ENCODE measurements at regions of chr10 and their contacts with region 1.

Region 1: GRCh38 chr10:18214691-18215563 is 74.7 kb downstream of the CACNB2 start:
- DNase-seq: peak in 3 of 4 experiments; percentile 18 to 50 (median 47)
- ATAC-seq: peak; percentile 84
- H3K4me3 ChIP-seq: no peak overlapping the region
- H3K27ac ChIP-seq: no peak overlapping the region
- H3K4me1 ChIP-seq: no peaks in the 10 kb centered on the region
- H3K27me3 ChIP-seq: peaks cover 0 to 2% of the 10 kb centered on the region in 2 experiments; a peak in 2 of 5 replicates
- CTCF ChIP-seq: peak; percentile 65 to 72 (median 68)
- EP300 ChIP-seq: no peak
- POLR2A ChIP-seq: no peak
- RAD21 ChIP-seq: peak; percentile 67 to 78

Region 2: GRCh38 chr10:16853201-16853600 is 1361.7 kb before region 1 on chr10:
- CTCF ChIA-PET with region 1: no interaction called
- POLR2A ChIA-PET with region 1: no interaction called
- in situ Hi-C with region 1: no loop called
- intact Hi-C with region 1: loop called (anchors 5 kb)
- DNase-seq: peak in 2 of 4 experiments; percentile 17 to 45
- ATAC-seq: peak; percentile 71
- H3K4me3 ChIP-seq: no peak overlapping the region
- H3K27ac ChIP-seq: no peak overlapping the region
- H3K4me1 ChIP-seq: no peaks in the 10 kb centered on the region
- H3K27me3 ChIP-seq: peaks cover 0 to 2% of the 10 kb centered on the region in 2 experiments; a peak in 2 of 5 replicates
- CTCF ChIP-seq: peak; percentile 29 to 71 (median 44); a peak in 4 of 6 replicates
- EP300 ChIP-seq: no peak
- POLR2A ChIP-seq: no peak
- RAD21 ChIP-seq: peak; percentile 74 to 79

Region 3: GRCh38 chr10:17607603-17608332 is 607.2 kb before region 1 on chr10:
- CTCF ChIA-PET with region 1: no interaction called
- POLR2A ChIA-PET with region 1: no interaction called
- in situ Hi-C with region 1: loop called (anchors 10 kb)
- intact Hi-C with region 1: loop called (anchors 2 kb)
- DNase-seq: peak; percentile 47 to 71 (median 52)
- ATAC-seq: peak; percentile 94
- H3K4me3 ChIP-seq: no peak overlapping the region
- H3K27ac ChIP-seq: no peak overlapping the region
- H3K4me1 ChIP-seq: peaks cover 0 to 2% of the 10 kb centered on the region in 2 experiments; a peak in 2 of 5 replicates
- H3K27me3 ChIP-seq: no peaks in the 10 kb centered on the region
- CTCF ChIP-seq: peak; percentile 69 to 90 (median 74)
- EP300 ChIP-seq: no peak
- POLR2A ChIP-seq: no peak
- RAD21 ChIP-seq: peak; percentile 90 to 95

Region 4: GRCh38 chr10:17737027-17737965 is 477.6 kb before region 1 on chr10:
- CTCF ChIA-PET with region 1: no interaction called
- POLR2A ChIA-PET with region 1: no interaction called
- in situ Hi-C with region 1: no loop called
- intact Hi-C with region 1: loop called (anchors 5 kb)
- DNase-seq: peak in 1 of 4 experiments; percentile 54
- ATAC-seq: peak; percentile 48; the same call in 1 of the 3 replicates
- H3K4me3 ChIP-seq: no peak overlapping the region
- H3K27ac ChIP-seq: no peak overlapping the region
- H3K4me1 ChIP-seq: peaks cover 3 to 4% of the 10 kb centered on the region in 2 experiments; a peak in 3 of 5 replicates
- H3K27me3 ChIP-seq: no peaks in the 10 kb centered on the region
- CTCF ChIP-seq: peak; percentile 39 to 75 (median 69); a peak in 5 of 6 replicates
- EP300 ChIP-seq: no peak
- POLR2A ChIP-seq: no peak
- RAD21 ChIP-seq: peak; percentile 26 to 61; a peak in 2 of 4 replicates

Region 5: DNA sequence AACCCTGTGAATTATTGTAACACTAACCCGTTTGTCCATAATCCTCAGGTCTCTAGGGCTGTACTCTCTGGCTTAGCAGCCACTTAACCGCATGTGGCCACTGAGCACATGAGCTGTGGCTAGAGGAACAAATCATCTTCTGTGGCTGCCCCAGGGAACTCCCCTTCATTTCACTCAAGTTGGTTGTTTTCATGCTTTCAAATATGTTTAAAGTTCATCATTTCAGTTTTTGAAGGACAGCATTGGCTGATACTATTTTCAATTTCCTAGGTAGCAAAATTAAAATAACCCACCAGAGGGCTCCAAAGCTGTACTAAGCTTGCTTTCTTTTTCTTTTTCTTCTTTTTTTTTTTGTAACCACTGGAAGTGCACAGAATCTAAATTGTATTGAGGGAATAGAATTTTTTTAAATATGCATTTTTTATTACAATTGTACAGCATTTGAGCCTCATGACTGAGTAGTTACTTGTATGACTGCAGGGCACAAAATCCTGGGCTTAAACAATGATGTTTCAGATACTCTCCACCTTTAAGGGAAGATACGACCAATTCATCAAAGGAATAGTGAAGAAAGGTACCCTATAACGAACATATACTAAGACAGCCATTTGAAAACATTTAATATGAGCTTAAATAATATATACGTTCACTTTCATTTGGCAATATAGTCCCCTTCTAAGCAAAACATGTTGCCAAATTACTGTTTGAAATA is 367.2 kb before region 1 on chr10:
- CTCF ChIA-PET with region 1: no interaction called
- POLR2A ChIA-PET with region 1: no interaction called
- in situ Hi-C with region 1: no loop called
- intact Hi-C with region 1: loop called (anchors 2 kb)
- DNase-seq: peak in 3 of 4 experiments; percentile 10 to 23 (median 14)
- ATAC-seq: peak; percentile 49; the same call in 1 of the 3 replicates
- H3K4me3 ChIP-seq: no peak overlapping the region
- H3K27ac ChIP-seq: no peak overlapping the region
- H3K4me1 ChIP-seq: no peaks in the 10 kb centered on the region
- H3K27me3 ChIP-seq: peaks cover 0 to 6% of the 10 kb centered on the region in 2 experiments; a peak in 4 of 5 replicates
- CTCF ChIP-seq: peak; percentile 36 to 63 (median 39); a peak in 4 of 6 replicates
- EP300 ChIP-seq: no peak
- POLR2A ChIP-seq: no peak
- RAD21 ChIP-seq: peak in 1 of 2 experiments; percentile 44; a peak in 2 of 4 replicates

Region 6: DNA sequence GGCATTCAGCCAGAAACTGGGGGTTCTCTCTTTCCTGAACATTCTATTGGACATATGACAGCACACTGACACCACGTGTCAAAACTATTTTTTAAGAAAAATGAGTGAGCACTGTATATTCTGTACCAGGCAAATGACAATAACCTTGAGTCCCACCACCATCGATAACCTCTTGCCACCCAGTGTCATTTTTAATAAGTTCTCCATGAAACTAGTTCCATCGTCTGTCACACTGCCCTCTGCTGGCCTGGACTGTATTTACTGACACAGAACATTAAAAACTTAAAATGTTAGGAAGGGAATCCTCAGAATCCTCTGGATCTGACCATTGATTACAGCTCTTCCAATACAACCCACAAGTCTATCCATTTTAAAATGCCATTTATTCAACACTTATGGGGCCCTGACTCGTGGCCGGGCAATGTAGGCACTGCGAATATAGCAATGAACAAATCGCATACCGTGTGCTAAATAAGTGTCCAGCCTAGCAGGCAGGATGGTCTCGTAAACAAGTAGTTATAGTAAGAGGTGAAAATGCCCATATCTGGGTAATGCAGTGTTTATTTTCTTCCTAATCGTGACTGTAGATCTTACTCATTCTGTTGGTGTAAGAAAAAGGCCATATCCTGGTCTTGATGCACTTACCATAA is 110.6 kb before region 1 on chr10:
- CTCF ChIA-PET with region 1: no interaction called
- POLR2A ChIA-PET with region 1: no interaction called
- in situ Hi-C with region 1: no loop called
- intact Hi-C with region 1: loop called (anchors 1 kb)
- DNase-seq: peak; percentile 20 to 59 (median 30)
- ATAC-seq: peak; percentile 67; the same call in 2 of the 3 replicates
- H3K4me3 ChIP-seq: no peak overlapping the region
- H3K27ac ChIP-seq: no peak overlapping the region
- H3K4me1 ChIP-seq: no peaks in the 10 kb centered on the region
- H3K27me3 ChIP-seq: no peaks in the 10 kb centered on the region
- CTCF ChIP-seq: peak; percentile 56 to 72 (median 65); a peak in 5 of 6 replicates
- EP300 ChIP-seq: no peak
- POLR2A ChIP-seq: no peak
- RAD21 ChIP-seq: peak; percentile 21 to 54; a peak in 3 of 4 replicates

Region 7: DNA sequence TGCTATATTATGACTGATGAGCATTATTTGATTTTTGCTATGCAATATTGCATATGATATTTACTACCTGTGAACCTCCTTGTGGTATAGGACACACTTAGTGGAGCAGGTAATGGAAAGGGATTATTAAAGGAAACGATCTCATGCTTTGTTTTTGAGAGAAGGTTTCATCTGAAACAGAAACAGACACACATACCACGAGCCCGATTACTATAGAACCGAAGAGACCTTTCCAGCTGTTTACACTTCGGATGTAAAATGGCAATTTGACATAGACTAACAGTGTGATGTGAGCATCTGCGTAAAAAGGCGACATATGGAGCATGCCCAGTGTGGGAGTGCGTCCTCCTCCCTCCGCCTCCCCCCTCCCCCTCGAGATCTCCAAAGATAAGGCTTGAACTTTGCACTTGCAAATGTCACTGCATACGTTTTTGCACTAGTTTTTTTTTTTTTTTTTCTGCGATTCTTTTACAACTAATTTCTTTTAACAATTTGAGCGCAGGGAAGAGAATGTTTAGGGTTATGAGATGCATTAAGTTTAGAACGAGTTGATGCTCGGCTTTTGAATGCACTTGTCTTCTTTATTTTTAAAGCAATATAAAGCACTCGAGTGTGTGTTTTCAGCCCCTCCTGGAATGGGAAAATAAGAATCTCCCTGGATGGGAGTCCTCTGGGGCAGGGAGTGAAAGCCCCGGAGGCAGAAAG is 185.4 kb after region 1 on chr10:
- CTCF ChIA-PET with region 1: no interaction called
- POLR2A ChIA-PET with region 1: no interaction called
- in situ Hi-C with region 1: no loop called
- intact Hi-C with region 1: no loop called
- DNase-seq: peak in 3 of 4 experiments; percentile 9 to 12 (median 11)
- ATAC-seq: no peak; the same call in 1 of the 3 replicates
- H3K4me3 ChIP-seq: no peak overlapping the region
- H3K27ac ChIP-seq: no peak overlapping the region
- H3K4me1 ChIP-seq: no peaks in the 10 kb centered on the region
- H3K27me3 ChIP-seq: peaks cover 2 to 4% of the 10 kb centered on the region in 2 experiments; a peak in 3 of 5 replicates
- CTCF ChIP-seq: no peak
- EP300 ChIP-seq: no peak
- POLR2A ChIP-seq: no peak
- RAD21 ChIP-seq: no peak